ENCODE measurements at regions of chr6 and their contacts with region 1.

Region 1: DNA sequence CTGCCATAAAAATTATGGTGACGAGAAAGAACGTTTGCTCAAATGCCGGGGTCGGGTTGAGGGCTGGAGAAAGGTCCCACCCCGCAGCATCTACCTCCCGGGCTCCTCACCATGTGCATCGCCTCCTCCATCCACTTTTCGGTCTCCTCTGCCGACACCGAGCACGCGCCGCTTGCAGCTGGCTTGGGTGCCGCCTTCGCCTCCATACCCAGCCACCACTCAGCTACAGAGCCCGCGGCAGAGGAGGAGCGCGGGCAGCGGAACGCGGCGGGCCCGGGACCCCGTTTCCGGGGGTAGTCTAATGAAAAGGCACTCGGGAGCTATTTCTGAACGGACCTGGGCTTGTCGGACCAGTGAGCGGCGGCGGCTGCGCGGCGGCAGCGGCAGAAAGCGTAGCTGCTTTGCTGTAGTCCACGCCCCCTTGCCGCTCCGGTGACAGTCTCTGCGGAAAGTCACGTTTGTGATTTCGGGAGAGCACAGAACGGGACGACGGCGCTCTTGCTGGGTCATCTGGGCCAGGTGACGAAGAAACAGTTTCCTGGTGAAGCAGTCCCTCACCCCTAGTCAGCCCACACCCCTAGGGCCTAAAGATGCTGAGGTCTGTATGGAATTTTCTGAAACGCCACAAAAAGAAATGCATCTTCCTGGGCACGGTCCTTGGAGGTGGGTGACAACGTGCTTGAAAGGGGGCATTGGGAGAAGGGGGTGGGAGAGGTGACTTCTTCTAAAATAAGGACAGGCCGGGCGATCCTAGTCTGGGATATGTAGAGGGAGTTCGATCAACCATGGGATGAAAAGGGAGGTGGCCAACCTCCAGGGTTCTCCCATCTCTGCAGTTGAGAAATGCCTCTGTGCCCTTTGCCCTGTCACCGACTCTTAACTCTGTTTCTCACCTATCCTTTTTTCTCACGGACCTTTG is at the starts of genes ADAT2 and PEX3:
- DNase-seq: peak; percentile 90
- ATAC-seq: peak; percentile 98
- H3K4me3 ChIP-seq: peak within 1 kb of the TSS; percentile 62 to 95
- H3K27ac ChIP-seq: peak within 1 kb of the TSS; percentile 51
- H3K4me1 ChIP-seq: peaks cover 2 to 16% of the 10 kb centered on the region in 2 experiments; a peak in 2 of 4 replicates
- H3K27me3 ChIP-seq: no peaks in the 10 kb centered on the region
- CTCF ChIP-seq: no peak
- POLR2A ChIP-seq: peak; percentile 52
- RAD21 ChIP-seq: peak; percentile 40; the same call in 1 of the 2 replicates
- total RNA-seq, gene ADAT2: 18.4 TPM
- total RNA-seq, gene PEX3: 12.9 TPM

Region 2: GRCh38 chr6:143510991-143511891 is 60.5 kb after region 1 on chr6 and contains the start of gene FUCA2:
- CTCF ChIA-PET with region 1: no interaction called
- POLR2A ChIA-PET with region 1: no interaction called
- RAD21 ChIA-PET with region 1: no interaction called
- intact Hi-C with region 1: loop called (anchors 2 kb)
- DNase-seq: peak; percentile 57
- ATAC-seq: peak; percentile 84
- H3K4me3 ChIP-seq: peak within 1 kb of the TSS; percentile 50 to 77
- H3K27ac ChIP-seq: peak within 1 kb of the TSS; percentile 85
- H3K4me1 ChIP-seq: peaks cover 2 to 21% of the 10 kb centered on the region in 2 experiments; a peak in 3 of 4 replicates
- H3K27me3 ChIP-seq: no peaks in the 10 kb centered on the region
- CTCF ChIP-seq: no peak
- POLR2A ChIP-seq: peak; percentile 85
- RAD21 ChIP-seq: no peak
- total RNA-seq, gene FUCA2: 75.4 TPM